HepG2 (cell line): ENCODE measurements at regions of chr16 and their contacts with region 1.

Region 1: GRCh38 chr16:56551796-56552738 is 12.8 kb upstream of the MT4 start:
- DNase-seq: peak; percentile 84
- ATAC-seq: peak; percentile 91
- H3K4me3 ChIP-seq: peak overlapping the region in 2 of 3 experiments; percentile 1 to 29; a peak in 3 of 6 replicates
- H3K27ac ChIP-seq: peak overlapping the region; percentile 46
- H3K4me1 ChIP-seq: peaks cover 66% of the 10 kb centered on the region
- H3K27me3 ChIP-seq: peaks cover 0 to 21% of the 10 kb centered on the region in 2 experiments; a peak in 3 of 5 replicates
- CTCF ChIP-seq: no peak
- EP300 ChIP-seq: peak in 1 of 2 experiments; percentile 81; a peak in 2 of 4 replicates
- POLR2A ChIP-seq: no peak
- RAD21 ChIP-seq: no peak

Region 2: DNA sequence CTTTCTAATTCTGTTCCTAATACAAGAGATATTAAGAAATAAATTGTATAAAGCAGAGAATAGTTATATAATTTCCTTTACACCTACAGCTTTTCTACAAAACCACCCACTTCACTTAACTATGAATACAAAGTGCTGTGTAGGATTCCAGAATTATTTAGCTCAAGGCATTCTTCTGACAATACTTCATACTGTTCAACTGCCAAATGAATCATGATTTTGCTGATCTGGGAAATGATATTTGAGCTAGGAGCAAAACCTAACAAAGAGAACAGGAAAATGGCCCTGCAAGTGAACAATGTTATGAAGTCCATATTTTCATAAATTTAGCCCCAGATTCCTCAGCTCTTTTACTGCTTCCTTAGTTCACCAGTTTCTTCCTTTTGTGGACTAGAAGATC is 45.1 kb before region 1 on chr16:
- CTCF ChIA-PET with region 1: no interaction called
- POLR2A ChIA-PET with region 1: no interaction called
- in situ Hi-C with region 1: no loop called
- intact Hi-C with region 1: no loop called
- DNase-seq: no peak
- ATAC-seq: no peak
- H3K4me3 ChIP-seq: no peak overlapping the region
- H3K27ac ChIP-seq: no peak overlapping the region
- H3K4me1 ChIP-seq: no peaks in the 10 kb centered on the region
- H3K27me3 ChIP-seq: no peaks in the 10 kb centered on the region
- CTCF ChIP-seq: no peak
- EP300 ChIP-seq: no peak
- POLR2A ChIP-seq: no peak
- RAD21 ChIP-seq: no peak

Region 3: GRCh38 chr16:56530872-56531271 is 21.2 kb before region 1 on chr16:
- CTCF ChIA-PET with region 1: no interaction called
- POLR2A ChIA-PET with region 1: interaction called, 4 read pairs
- in situ Hi-C with region 1: no loop called
- intact Hi-C with region 1: loop called (anchors 1 kb)
- DNase-seq: no peak
- ATAC-seq: no peak
- H3K4me3 ChIP-seq: no peak overlapping the region
- H3K27ac ChIP-seq: no peak overlapping the region
- H3K4me1 ChIP-seq: no peaks in the 10 kb centered on the region
- H3K27me3 ChIP-seq: peaks cover 0 to 5% of the 10 kb centered on the region in 2 experiments; a peak in 2 of 5 replicates
- CTCF ChIP-seq: no peak
- EP300 ChIP-seq: no peak
- POLR2A ChIP-seq: no peak
- RAD21 ChIP-seq: no peak